ENCODE measurements at regions of chr10 and their contacts with region 1.

Region 1: DNA sequence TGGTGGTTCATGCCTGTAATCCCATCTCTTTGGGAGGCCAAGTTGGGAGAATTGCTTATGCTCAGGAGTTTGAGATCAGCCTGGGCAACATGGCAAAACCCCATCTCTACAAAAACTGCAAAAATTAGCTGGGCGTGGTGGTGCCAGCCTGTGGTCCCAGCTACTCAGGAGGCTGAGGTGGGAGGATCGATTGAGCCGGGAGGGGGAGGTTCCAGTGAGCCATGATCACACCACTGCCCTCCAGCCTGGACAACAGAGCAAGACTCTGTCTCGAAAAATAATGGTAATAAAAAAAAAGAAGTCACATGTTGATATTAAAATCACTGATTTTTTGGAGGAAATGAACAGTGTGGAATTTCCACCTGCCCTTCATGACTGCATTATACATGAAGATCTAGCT is 15.8 kb downstream of the PHYH start:
- DNase-seq: no peak
- H3K4me3 ChIP-seq: no peak overlapping the region
- H3K27ac ChIP-seq: no peak overlapping the region
- H3K4me1 ChIP-seq: no peaks in the 10 kb centered on the region
- H3K27me3 ChIP-seq: no peaks in the 10 kb centered on the region
- CTCF ChIP-seq: no peak
- EP300 ChIP-seq: no peak
- POLR2A ChIP-seq: no peak
- RAD21 ChIP-seq: no peak

Region 2: GRCh38 chr10:13271552-13272163 is 12.4 kb before region 1 on chr10:
- CTCF ChIA-PET with region 1: interaction called, 11 read pairs
- POLR2A ChIA-PET with region 1: interaction called, 3 read pairs
- DNase-seq: peak; percentile 38 to 91
- H3K4me3 ChIP-seq: no peak overlapping the region; a peak in 1 of 8 replicates
- H3K27ac ChIP-seq: peak overlapping the region; percentile 36; the same call in 1 of the 2 replicates
- H3K4me1 ChIP-seq: peaks cover 4 to 12% (median 7%) of the 10 kb centered on the region in 4 experiments
- H3K27me3 ChIP-seq: no peaks in the 10 kb centered on the region; a peak in 1 of 7 replicates
- CTCF ChIP-seq: peak; percentile 72 to 88 (median 84)
- EP300 ChIP-seq: no peak
- POLR2A ChIP-seq: no peak
- RAD21 ChIP-seq: peak; percentile 60 to 77